Endothelial cell of umbilical vein (primary cell): ENCODE measurements at regions of chr4 and their contacts with region 1.

Region 1: DNA sequence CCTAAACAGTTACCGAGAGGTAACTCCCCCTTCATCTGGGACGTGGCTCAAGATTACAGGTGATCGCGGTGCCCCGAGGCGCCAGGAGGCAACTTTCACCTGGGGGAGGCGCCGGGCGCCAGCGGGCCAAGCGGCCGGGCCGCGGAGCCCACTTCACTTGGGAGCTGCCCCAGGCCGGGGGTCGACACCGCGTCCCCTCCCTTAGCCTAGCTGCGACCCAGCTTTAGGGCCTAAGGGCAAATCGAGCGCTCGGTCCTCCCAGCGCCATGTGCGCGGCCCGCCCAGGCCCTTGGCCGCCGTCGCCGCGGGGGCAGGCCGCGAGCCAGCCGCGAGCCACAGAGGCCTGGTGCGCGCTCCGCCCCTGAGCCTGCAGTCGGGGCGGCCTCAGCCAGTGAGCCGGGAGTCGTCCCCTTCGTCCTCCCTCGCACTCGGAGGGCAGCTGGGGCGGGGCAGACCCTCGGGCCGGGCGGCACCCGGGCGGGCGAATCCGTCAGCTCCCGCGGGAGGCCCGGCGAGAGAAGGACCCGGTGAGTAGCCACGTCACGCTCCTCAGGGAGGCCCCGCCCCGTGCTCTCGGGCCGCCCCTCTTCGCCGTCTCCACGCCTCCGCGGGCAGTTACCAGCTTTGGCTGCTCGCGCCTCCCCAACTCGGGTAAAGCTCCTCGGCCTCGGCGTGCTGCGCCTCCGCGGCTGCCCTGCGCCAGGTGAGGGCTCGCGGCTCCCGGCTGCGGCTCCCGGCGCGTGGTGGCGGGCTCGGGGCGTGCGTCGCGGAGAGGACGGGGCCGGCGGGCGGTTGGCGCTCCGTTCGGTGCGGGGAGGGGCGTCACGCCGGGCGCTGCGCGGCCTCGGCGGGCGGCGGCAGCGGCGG is at the start of gene LARP1B:
- DNase-seq: peak; percentile 97
- H3K4me3 ChIP-seq: peak within 1 kb of the TSS; percentile 74 to 86 (median 86)
- H3K27ac ChIP-seq: peak within 1 kb of the TSS; percentile 87
- H3K4me1 ChIP-seq: peaks cover 10% of the 10 kb centered on the region
- H3K27me3 ChIP-seq: no peaks in the 10 kb centered on the region
- CTCF ChIP-seq: no peak
- POLR2A ChIP-seq: peak; percentile 94
- total RNA-seq, gene LARP1B: 27.7 and 28.8 TPM in 2 replicates

Region 2: DNA sequence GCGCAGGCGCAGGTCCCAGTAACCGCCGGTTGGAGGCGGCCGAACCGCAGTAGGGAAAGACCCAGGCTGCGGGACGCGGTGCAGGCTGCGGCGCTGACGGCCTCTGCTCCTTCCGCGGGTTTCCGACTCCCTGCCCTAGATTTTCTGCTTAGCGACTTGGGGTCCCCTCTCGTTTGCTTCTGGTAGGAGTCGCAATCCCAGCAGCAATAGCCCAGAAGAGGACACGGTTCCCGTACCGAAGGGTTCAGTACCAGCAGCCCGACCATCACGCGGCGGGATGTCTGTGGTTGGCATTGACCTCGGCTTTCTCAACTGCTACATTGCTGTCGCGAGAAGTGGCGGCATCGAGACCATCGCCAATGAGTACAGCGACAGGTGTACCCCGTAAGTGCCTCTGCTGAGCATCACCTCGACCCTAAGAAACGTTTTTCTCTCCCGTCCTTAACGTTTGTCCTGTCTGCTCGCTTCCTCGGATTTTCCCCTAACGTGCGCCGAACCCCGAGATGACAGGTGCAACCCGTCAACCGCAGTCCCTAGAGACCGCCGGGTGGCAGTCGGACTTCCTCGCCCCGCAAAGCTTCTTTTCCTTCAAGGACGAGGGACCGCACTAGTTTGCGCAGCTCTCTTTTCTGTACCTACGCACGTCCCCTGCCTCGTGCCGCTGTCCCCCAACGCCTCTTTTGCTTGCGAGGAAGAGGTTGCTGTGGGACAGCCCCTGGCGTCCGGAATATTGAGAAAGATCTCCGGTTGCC is 278.5 kb before region 1 on chr4 and contains the start of gene HSPA4L:
- CTCF ChIA-PET with region 1: no interaction called
- POLR2A ChIA-PET with region 1: no interaction called
- dilution Hi-C with region 1: no loop called
- intact Hi-C with region 1: loop called (anchors 1 kb)
- DNase-seq: peak; percentile 89
- H3K4me3 ChIP-seq: peak within 1 kb of the TSS; percentile 35 to 53 (median 53)
- H3K27ac ChIP-seq: peak within 1 kb of the TSS; percentile 50
- H3K4me1 ChIP-seq: peaks cover 2% of the 10 kb centered on the region
- H3K27me3 ChIP-seq: peaks cover 0 to 2% of the 10 kb centered on the region in 2 experiments
- CTCF ChIP-seq: peak in 1 of 2 donors; percentile 41
- POLR2A ChIP-seq: peak; percentile 68
- total RNA-seq, gene HSPA4L: 10.8 and 12.4 TPM in 2 replicates

Region 3: GRCh38 chr4:127965062-127965802 is 95.7 kb before region 1 on chr4 and contains the starts of genes ABHD18 and MFSD8:
- CTCF ChIA-PET with region 1: interaction called, 4 read pairs
- POLR2A ChIA-PET with region 1: interaction called, 11 read pairs
- dilution Hi-C with region 1: no loop called
- intact Hi-C with region 1: loop called (anchors 1 kb)
- DNase-seq: peak; percentile 99
- H3K4me3 ChIP-seq: peak within 1 kb of the TSS; percentile 70 to 85 (median 71)
- H3K27ac ChIP-seq: peak within 1 kb of the TSS; percentile 62
- H3K4me1 ChIP-seq: peaks cover 8% of the 10 kb centered on the region
- H3K27me3 ChIP-seq: no peaks in the 10 kb centered on the region
- CTCF ChIP-seq: peak; percentile 32 to 61
- POLR2A ChIP-seq: peak; percentile 76
- total RNA-seq, gene ABHD18: 9.1 and 10.1 TPM in 2 replicates
- total RNA-seq, gene MFSD8: 19.4 and 21.3 TPM in 2 replicates

Region 4: DNA sequence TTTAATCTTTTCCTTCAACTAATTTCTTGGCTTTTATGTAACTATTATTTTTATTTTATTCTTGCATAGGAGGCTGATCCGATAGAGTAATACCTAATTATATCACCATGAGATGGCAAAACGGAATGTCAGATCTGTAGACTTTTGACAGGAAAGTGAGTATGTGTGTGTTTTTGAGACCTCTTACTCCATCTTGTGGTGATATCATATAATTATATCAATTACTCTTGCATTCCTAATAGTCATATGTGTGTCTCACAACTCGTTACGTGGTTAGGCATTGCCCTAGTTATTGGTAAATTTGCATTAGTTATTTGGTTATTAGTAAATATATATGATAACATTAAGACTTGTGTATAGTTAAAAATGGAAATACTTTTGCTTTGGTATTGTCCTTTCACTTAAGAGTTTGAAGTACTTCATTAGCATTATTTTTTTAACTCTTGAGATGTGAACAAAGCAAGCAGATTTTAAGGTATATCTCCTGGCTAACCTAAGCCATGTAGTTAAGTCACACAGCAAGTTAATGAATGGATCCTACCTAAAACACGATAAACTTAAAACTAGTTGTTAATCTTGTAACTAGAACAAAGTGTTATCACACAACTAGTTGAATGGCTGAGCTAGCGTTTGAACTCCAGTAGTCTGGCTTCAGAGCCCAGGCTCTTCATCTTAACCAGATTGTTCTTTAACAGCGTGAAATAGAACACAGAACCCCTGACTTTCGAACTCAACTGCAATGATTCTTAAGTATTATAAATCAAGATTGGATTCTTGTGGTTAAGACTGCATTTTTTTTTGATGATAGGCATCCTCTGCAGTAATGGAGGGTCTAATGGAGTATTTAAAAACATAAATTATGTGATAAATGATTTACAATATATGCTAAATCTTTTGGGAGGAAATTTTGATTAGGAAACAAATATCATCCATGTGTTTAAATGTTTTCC is 159.6 kb after region 1 on chr4:
- CTCF ChIA-PET with region 1: interaction called, 5 read pairs
- POLR2A ChIA-PET with region 1: no interaction called
- dilution Hi-C with region 1: no loop called
- intact Hi-C with region 1: loop called (anchors 2 kb)
- DNase-seq: peak; percentile 70
- H3K4me3 ChIP-seq: no peak overlapping the region
- H3K27ac ChIP-seq: peak overlapping the region; percentile 28
- H3K4me1 ChIP-seq: no peaks in the 10 kb centered on the region
- H3K27me3 ChIP-seq: no peaks in the 10 kb centered on the region
- CTCF ChIP-seq: peak; percentile 16 to 20
- POLR2A ChIP-seq: no peak